Right ventricle myocardium superior (tissue), 1 donor: ENCODE measurements at regions of chr19 and their contacts with region 1.

Region 1: DNA sequence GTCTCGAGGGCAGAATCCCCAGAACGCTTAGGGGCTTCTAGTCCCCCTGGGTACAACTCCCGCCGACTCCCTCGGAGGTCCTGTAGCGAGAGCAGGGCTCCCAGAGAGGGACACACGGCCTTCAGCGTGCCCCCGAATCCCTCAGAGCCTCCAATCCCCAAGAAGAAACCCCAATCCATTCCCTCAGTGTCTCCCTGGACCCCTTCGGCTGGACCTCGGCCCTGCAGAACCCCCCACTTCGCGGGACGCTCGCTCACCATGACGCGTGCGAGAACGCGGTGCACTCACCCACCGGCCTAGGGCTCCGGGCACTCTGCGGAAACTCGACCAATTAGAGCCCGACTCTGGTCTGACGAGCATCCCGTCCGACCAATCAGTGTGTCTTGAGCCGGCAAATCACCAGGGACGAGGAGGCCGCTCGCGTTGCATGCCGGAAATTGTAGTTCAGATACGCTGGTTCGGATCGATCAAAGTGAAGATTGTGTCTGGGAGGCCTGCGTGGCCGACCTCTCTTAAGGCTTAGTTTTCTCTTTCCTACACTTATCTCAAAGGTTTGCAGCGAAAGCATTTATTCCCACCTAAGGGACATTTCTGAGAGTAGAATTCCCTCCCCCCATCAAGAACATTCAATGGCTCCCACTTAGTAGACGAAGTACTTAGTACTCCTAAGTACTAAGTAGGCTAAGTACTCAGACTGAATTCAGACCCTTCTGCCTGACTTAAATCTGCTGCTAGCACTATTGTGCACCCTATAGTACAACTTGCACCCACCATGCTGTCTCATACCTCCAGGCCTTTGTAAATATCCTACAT is at the start of gene TMEM161A:
- DNase-seq: peak; percentile 98
- ATAC-seq: peak; percentile 96
- total RNA-seq, gene TMEM161A: 23.0 TPM

Region 2: GRCh38 chr19:19053508-19054314 is 84.7 kb before region 1 on chr19:
- intact Hi-C with region 1: loop called (anchors 5 kb)
- DNase-seq: peak; percentile 74
- ATAC-seq: peak; percentile 83